Prostate gland (tissue), 2 donors: ENCODE measurements at regions of chr2 and their contacts with region 1.

Region 1: DNA sequence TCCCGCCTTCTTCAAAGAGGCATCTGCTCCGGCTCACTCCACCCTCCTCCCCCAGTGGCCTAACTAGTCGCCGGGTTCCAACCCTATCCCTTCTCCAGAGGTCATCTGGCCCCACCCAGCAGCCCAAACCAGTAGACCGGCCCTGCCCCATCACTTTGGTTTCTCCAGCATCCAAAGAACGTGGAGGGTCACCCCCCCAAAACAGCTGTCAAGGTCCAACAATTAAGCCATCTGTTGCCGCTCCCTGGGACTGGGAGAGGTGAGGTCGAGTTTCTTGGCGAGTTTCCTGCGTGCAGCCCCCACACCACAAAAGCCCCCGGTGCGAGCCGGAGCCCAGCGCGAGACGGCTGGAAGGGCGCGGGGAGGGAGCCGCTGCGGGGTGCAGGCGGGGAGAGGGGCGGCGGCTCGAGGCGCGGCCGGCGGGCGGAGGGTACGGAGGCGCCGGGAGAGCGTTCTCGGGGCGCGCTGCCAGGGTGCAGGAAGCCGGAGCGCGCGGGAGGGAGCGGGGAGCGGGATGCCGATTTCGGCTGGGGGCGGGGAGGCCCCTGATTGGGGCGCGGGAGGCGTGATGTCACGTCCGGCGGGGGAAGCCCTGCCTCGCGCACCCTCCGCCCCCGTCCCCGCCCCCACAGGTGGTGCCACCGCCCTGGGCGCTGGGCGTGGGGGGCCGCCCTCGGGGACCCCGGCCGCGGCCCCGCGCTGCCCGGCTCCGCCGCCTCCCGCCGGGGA is 571 bp upstream of the GPC1 start:
- DNase-seq: peak; percentile 92
- H3K4me3 ChIP-seq: peak overlapping the region; percentile 70 to 76
- H3K27ac ChIP-seq: peak overlapping the region; percentile 82 to 95
- H3K4me1 ChIP-seq: peaks cover 16% of the 10 kb centered on the region
- H3K27me3 ChIP-seq: no peaks in the 10 kb centered on the region
- CTCF ChIP-seq: peak in 2 of 4 experiments; percentile 6 to 10
- POLR2A ChIP-seq: peak; percentile 73

Region 2: DNA sequence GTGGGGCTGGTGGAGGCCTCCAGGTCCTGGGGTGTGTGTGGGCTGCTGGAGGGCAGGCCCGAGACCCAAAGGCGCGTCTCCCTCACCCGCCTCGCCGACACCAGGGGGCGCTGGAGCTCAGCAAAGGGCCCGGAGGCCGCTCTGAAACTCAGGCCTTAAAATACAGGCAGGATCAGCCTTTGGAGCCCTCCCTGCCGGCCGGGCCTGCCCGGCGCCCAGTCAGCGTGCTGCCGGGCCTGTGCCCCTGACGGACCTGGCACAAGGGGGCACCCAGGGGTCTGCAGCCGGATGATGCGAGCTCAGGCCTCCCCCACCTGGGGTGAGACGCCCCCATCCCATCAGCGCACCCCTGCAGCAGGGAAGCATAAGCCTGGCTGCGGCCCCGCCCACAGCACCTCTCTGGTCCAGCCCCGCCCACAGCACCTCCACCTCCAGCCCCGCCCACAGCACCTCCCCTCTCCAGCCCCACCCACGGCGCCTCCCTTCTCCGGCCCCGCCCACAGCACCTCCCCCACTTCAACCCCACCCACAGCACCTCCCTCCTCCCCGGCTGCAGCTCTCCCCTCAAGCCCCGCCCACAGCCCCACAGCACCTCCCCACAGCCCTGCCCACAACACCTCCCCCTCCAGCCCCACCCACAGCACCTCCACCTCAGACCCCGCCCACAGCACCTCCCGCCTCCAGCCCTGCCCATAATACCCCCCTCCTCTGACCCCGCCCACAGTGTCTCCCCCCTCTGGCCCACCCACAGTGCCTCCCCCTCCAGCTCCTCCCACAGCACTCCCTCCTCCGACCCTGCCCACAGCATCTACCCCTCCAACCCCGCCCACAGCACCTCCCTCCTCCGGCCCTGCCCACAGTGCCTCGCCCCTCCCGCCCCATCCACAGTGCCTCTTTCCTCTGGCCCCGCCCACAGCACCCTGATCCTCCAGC is 201.7 kb before region 1 on chr2:
- intact Hi-C with region 1: loop called (anchors 1 kb)
- DNase-seq: peak; percentile 92
- H3K4me3 ChIP-seq: peak overlapping the region in 1 of 2 donors; percentile 34
- H3K27ac ChIP-seq: peak overlapping the region; percentile 44 to 50
- H3K4me1 ChIP-seq: no peaks in the 10 kb centered on the region
- H3K27me3 ChIP-seq: no peaks in the 10 kb centered on the region
- CTCF ChIP-seq: peak; percentile 93 to 98 (median 96)
- POLR2A ChIP-seq: peak; percentile 24

Region 3: DNA sequence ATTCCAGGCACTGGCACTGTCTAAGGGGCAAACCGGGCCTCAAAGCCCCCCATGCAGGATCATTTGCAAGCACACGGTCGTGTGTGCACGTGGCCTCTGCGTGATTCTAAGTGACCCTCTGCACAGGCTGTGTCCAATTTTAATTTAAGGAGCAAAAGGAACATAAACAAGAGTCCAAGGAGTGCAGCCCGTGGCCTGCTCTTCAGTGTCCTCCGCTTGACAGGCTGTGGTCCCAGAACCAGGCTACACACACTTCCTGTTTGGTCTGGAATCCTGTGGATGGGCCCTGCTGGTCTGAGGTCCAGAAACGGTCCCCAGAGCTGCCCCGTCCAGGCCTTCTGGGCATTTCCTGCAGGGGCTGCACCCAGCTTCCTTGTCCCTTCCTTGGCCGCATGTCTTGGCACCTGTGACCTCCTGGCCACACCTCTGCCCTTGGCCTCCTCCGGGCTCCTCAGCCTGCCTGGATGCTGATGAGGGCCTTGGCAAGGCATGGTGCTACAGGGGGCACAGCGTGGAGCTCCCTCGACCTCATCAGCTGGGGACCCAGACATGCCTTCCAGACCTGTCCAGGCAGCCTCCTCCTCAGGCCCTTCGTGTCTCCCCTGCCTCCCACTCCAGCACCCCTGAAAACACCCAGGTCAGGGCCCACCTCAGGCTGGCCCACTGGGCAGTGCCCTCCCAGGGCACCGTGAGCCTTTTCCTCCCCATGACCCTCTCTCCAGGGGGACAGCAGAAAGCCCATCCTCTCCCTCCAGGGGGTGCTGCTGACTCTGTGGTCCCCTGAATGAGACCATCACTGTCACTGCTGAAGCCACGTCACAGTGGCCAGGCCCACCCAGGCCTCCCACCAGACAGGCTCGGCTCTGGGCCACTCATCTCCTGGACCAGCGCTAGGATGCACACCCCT is 135.8 kb before region 1 on chr2:
- intact Hi-C with region 1: loop called (anchors 2 kb)
- DNase-seq: no peak
- H3K4me3 ChIP-seq: no peak overlapping the region
- H3K27ac ChIP-seq: no peak overlapping the region
- H3K4me1 ChIP-seq: no peaks in the 10 kb centered on the region
- H3K27me3 ChIP-seq: no peaks in the 10 kb centered on the region
- CTCF ChIP-seq: no peak
- POLR2A ChIP-seq: no peak

Region 4: GRCh38 chr2:240310645-240311044 is 124.2 kb before region 1 on chr2:
- intact Hi-C with region 1: no loop called
- DNase-seq: no peak
- H3K4me3 ChIP-seq: no peak overlapping the region
- H3K27ac ChIP-seq: no peak overlapping the region
- H3K4me1 ChIP-seq: no peaks in the 10 kb centered on the region
- H3K27me3 ChIP-seq: no peaks in the 10 kb centered on the region
- CTCF ChIP-seq: no peak
- POLR2A ChIP-seq: no peak

Region 5: GRCh38 chr2:240369801-240370585 is 64.9 kb before region 1 on chr2:
- intact Hi-C with region 1: loop called (anchors 2 kb)
- DNase-seq: peak; percentile 39
- H3K4me3 ChIP-seq: no peak overlapping the region
- H3K27ac ChIP-seq: peak overlapping the region; percentile 39 to 41
- H3K4me1 ChIP-seq: peaks cover 4% of the 10 kb centered on the region
- H3K27me3 ChIP-seq: no peaks in the 10 kb centered on the region
- CTCF ChIP-seq: no peak
- POLR2A ChIP-seq: no peak